ENCODE measurements at regions of chrX and their contacts with region 1.

Region 1: DNA sequence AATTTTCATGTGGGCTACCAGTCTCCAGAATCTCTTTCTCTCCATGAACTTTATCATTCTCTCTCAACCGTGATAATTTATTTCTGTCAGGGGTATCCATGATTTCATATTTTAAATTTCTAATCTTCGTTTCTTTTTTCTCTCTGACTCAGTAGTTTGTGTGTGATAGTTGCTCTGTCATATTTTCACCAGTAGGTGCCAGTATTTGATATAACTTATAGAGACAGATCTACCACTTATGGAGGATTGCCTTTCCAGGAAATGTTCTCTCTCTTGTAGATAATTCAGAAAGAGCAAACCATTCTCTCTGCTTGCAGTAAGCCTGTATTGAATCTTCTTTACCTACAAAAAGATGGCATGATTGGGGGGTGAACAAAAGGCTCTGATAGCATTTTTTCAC is 79.3 kb upstream of the DYNLT3 start:
- DNase-seq: peak; percentile 25
- ATAC-seq: peak; percentile 53; the same call in 2 of the 3 replicates
- H3K4me3 ChIP-seq: no peak overlapping the region
- H3K27ac ChIP-seq: no peak overlapping the region
- H3K4me1 ChIP-seq: no peaks in the 10 kb centered on the region
- H3K27me3 ChIP-seq: no peaks in the 10 kb centered on the region
- CTCF ChIP-seq: peak; percentile 59
- EP300 ChIP-seq: no peak
- POLR2A ChIP-seq: no peak
- RAD21 ChIP-seq: peak; percentile 70

Region 2: GRCh38 chrX:37745354-37745753 is 181.3 kb before region 1 on chrX:
- CTCF ChIA-PET with region 1: no interaction called
- POLR2A ChIA-PET with region 1: no interaction called
- in situ Hi-C with region 1: no loop called
- intact Hi-C with region 1: loop called (anchors 10 kb)
- DNase-seq: peak; percentile 35
- ATAC-seq: peak; percentile 83
- H3K4me3 ChIP-seq: no peak overlapping the region
- H3K27ac ChIP-seq: no peak overlapping the region
- H3K4me1 ChIP-seq: no peaks in the 10 kb centered on the region
- H3K27me3 ChIP-seq: no peaks in the 10 kb centered on the region
- CTCF ChIP-seq: peak; percentile 75
- EP300 ChIP-seq: no peak
- POLR2A ChIP-seq: no peak
- RAD21 ChIP-seq: peak; percentile 35; the same call in 1 of the 2 replicates

Region 3: DNA sequence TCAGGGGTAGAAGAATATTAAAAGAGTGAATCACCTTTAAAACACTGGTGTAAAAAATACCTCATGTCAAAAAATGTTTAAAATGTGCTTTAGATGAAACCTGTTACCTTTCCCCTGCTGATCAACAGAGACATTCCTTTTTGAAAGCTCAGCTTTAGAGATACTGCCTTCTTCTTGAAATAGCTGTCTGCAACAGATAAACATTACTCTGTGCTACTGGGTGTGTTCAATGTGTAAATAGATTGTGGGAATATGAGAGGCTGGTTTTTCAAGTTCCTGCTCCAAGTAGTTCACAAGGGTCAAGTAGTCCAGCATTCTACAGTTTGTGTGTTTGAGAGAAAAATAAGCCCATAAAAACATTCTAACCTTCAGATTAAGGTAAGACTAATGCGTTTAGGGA is 79.6 kb after region 1 on chrX and contains the start of gene SYTL5:
- CTCF ChIA-PET with region 1: no interaction called
- POLR2A ChIA-PET with region 1: no interaction called
- in situ Hi-C with region 1: no loop called
- intact Hi-C with region 1: loop called (anchors 5 kb)
- DNase-seq: no peak
- ATAC-seq: no peak
- H3K4me3 ChIP-seq: no peak within 1 kb of the TSS
- H3K27ac ChIP-seq: no peak within 1 kb of the TSS
- H3K4me1 ChIP-seq: no peaks in the 10 kb centered on the region
- H3K27me3 ChIP-seq: no peaks in the 10 kb centered on the region
- CTCF ChIP-seq: no peak
- EP300 ChIP-seq: no peak
- POLR2A ChIP-seq: no peak
- RAD21 ChIP-seq: no peak
- total RNA-seq, gene SYTL5: not detected in 2 replicates

Region 4: GRCh38 chrX:38166478-38167083 is 239.9 kb after region 1 on chrX:
- CTCF ChIA-PET with region 1: interaction called, 32 read pairs
- POLR2A ChIA-PET with region 1: interaction called, 3 read pairs
- in situ Hi-C with region 1: loop called (anchors 5 kb)
- intact Hi-C with region 1: loop called (anchors 1 kb)
- DNase-seq: peak; percentile 1
- ATAC-seq: no peak
- H3K4me3 ChIP-seq: no peak overlapping the region
- H3K27ac ChIP-seq: no peak overlapping the region
- H3K4me1 ChIP-seq: no peaks in the 10 kb centered on the region
- H3K27me3 ChIP-seq: no peaks in the 10 kb centered on the region
- CTCF ChIP-seq: peak; percentile 44
- EP300 ChIP-seq: no peak
- POLR2A ChIP-seq: no peak
- RAD21 ChIP-seq: 0 out of 2 replicates have a peak, but pooled peaks have one; percentile 25